Heart right ventricle (tissue), 16 donors: ENCODE measurements at regions of chr3 and their contacts with region 1.

Region 1: DNA sequence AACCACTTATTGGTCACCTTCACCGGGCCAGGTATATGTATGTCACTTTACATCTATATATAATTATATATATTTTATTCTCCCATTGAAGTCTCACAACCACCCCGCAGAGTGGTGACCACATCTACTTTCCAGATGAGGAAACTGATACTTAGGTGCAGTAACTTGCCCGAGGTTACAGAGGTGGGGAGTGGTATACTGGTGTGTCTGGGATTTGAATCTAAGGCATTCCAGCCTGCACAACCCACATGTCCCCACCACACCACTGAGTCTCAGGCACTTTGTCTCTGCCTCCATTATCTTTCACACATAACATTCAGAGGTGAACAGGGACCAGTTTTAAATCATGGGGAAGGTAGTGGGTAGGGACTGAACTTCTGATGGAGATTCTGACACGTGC is 261.4 kb downstream of the CTNNB1 start:
- DNase-seq: no peak
- ATAC-seq: no peak
- H3K4me3 ChIP-seq: no peak overlapping the region
- H3K27ac ChIP-seq: no peak overlapping the region
- H3K4me1 ChIP-seq: peaks cover 0 to 7% (median 0%) of the 10 kb centered on the region in 9 donors
- H3K27me3 ChIP-seq: no peaks in the 10 kb centered on the region
- CTCF ChIP-seq: no peak

Region 2: GRCh38 chr3:39626198-39626597 is 1834.5 kb before region 1 on chr3:
- intact Hi-C with region 1: no loop called
- DNase-seq: no peak
- ATAC-seq: no peak
- H3K4me3 ChIP-seq: no peak overlapping the region
- H3K27ac ChIP-seq: no peak overlapping the region
- H3K4me1 ChIP-seq: no peaks in the 10 kb centered on the region
- H3K27me3 ChIP-seq: peaks cover 0 to 4% (median 0%) of the 10 kb centered on the region in 7 donors
- CTCF ChIP-seq: no peak

Region 3: GRCh38 chr3:41405466-41405865 is 55.3 kb before region 1 on chr3:
- intact Hi-C with region 1: loop called in 1 of 10 experiments (anchors 2 kb)
- DNase-seq: no peak
- ATAC-seq: no peak
- H3K4me3 ChIP-seq: no peak overlapping the region
- H3K27ac ChIP-seq: no peak overlapping the region
- H3K4me1 ChIP-seq: no peaks in the 10 kb centered on the region
- H3K27me3 ChIP-seq: no peaks in the 10 kb centered on the region
- CTCF ChIP-seq: no peak

Region 4: DNA sequence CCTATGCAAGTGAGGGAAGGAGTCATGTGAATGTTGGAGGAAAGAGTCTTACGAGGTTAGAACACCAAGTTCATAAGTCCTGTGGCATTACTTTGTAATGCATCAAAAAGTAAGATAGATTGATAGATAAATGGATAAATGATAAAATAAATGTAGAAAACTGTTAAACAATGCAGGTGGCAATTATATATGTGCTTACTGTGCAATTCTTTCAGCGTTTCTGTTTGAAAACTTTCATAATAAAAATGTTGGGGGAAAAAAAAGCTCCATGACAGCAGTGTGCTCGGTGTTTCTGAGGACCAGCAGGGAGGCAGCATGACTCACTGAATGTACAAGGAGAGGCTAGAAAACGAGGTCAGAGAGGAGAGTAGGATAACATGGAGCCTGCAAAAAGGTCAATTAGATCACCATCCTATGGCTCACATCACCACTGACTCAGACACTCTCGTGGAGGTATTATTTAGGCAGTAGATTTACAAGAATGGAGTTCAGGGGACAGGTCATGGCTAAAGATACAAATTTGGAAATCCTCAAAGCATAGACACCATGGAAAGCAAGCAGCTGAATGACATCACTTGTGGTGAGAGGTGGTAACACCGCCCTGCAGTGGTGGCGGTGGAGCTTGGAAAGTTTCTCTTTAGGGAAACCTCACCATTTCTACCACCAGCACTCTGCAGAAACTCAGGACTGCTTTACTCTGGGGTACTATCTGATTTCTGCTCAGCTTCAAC is 41.6 kb before region 1 on chr3:
- intact Hi-C with region 1: no loop called
- DNase-seq: no peak
- ATAC-seq: no peak
- H3K4me3 ChIP-seq: no peak overlapping the region
- H3K27ac ChIP-seq: no peak overlapping the region
- H3K4me1 ChIP-seq: no peaks in the 10 kb centered on the region
- H3K27me3 ChIP-seq: no peaks in the 10 kb centered on the region
- CTCF ChIP-seq: no peak

Region 5: DNA sequence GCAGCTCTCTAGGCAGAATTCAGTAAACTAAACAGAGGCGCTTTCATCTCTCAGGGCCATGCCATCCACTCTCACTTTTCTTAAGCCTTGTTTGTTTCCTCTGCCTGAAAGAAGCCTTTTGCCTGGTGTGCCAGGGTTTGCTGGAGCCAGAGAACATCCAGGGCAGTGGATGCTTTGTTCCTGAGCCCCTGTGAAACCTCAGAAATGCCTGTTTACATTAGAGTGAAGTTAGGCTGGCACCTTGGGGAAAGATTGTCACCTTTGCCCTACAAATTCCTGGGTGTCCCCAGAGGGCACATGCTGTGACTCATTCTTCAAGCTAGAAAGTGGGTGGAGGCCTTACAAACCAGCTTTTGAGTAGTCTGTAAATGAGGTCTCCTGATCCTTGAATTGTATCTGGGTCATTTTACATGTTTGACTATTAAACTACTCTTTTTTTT is 619.7 kb after region 1 on chr3:
- intact Hi-C with region 1: no loop called
- DNase-seq: no peak
- ATAC-seq: peak in 6 of 8 donors; percentile 9 to 72 (median 37)
- H3K4me3 ChIP-seq: no peak overlapping the region
- H3K27ac ChIP-seq: peak overlapping the region; percentile 11 to 77 (median 59)
- H3K4me1 ChIP-seq: peaks cover 17 to 84% (median 57%) of the 10 kb centered on the region in 9 donors
- H3K27me3 ChIP-seq: no peaks in the 10 kb centered on the region
- CTCF ChIP-seq: no peak